Activated T-helper 2 cell treated with anti-CD3 and anti-CD28 coated beads, Interferon-gamma antibody, Interleukin-2, Interleukin-4, amounts not matched to agents 10 μg/mL and 5 μg/mL and 100 μg/mL, durations not matched to agents 14 hours and 24 hours and 36 hours (primary cell): ENCODE measurements at regions of chr11 and their contacts with region 1.

Region 1: DNA sequence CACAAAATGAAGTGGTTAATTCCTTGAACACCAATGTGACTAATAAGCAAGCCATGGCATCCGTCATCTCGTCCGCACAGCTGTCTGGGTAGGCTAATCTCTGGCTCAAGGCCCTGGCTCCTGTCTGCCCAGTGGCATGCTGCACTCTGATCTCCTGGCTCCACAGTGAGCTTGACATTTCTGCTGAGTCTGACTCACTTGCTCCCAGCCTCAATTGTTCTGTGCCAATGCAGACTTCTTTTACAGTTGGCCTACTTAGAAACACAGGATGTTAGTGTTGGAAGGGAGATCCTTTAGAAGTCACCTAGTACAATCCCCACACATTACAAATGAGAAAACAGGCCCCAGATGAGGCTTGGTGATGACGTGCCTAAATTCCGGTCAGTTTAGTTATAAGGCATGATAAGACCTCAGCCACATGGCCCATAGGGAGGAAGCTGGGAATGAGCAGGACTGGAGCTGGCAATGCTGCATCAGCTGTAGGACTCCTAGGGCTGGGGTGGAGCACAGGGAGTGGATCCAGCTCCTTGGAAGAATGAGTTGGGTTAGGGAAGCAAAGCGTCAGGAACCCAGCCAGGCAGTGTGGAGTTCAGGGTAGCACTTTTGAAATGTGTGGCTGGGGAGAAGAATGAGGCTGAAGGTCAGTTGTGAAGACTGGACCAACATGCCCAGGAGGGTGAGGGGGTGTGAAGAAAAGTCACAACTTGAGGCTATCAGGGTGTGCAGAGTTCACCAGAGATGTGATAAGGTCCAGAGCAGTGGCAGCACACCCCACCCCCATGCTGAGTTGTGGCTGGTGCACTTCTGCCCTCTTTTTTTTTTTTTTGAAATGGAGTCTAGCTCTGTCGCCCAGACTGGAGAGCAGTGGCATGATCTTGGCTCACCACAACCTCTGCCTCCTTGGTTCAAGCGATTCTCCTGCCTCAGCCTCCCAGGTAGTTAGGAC is 70.2 kb upstream of the EED start:
- DNase-seq: no peak
- H3K4me3 Mint-ChIP-seq: no peak overlapping the region
- H3K27ac Mint-ChIP-seq: no peak overlapping the region
- H3K4me1 Mint-ChIP-seq: peaks cover 15% of the 10 kb centered on the region
- H3K27me3 Mint-ChIP-seq: no peaks in the 10 kb centered on the region

Region 2: DNA sequence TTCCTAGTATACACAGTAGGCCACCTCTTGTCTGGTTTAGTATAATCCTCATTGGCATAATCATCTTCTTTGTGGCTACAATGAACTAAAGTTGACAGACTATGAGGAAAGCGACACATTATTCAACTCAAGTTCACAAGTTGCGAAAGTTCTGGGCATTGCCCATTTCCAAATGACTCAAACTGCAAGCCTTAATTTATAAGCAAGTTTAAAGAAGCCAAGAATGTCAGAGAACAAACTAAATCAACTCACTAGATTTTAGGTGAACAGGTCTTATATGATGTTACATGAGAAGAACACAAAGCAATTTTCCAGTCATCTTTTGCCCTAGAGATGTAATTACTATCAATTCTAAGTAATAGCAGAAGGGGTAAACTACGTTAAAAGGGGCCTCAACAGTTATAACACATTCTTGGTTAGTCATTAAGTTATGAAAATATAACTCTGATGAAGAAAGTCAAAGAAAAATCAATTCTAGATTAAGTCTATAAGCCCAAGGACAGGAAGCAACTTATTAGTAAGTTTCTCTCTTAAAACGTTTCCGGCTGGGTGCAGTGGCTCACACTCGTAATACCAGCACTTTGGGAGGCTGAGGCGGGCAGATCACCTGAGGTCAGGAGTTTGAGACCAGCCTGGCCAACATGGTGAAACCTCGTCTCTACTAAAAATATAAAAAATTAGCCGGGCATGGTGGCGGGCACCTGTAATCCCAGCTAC is 126.9 kb before region 1 on chr11:
- intact Hi-C with region 1: loop called (anchors 1 kb)
- DNase-seq: no peak
- H3K4me3 Mint-ChIP-seq: peak overlapping the region; percentile 65
- H3K27ac Mint-ChIP-seq: peak overlapping the region; percentile 96
- H3K4me1 Mint-ChIP-seq: peaks cover 73% of the 10 kb centered on the region
- H3K27me3 Mint-ChIP-seq: no peaks in the 10 kb centered on the region

Region 3: GRCh38 chr11:86116386-86116726 is 58.0 kb before region 1 on chr11:
- intact Hi-C with region 1: loop called (anchors 1 kb)
- DNase-seq: no peak
- H3K4me3 Mint-ChIP-seq: peak overlapping the region; percentile 22
- H3K27ac Mint-ChIP-seq: peak overlapping the region; percentile 83
- H3K4me1 Mint-ChIP-seq: peaks cover 42% of the 10 kb centered on the region
- H3K27me3 Mint-ChIP-seq: no peaks in the 10 kb centered on the region

Region 4: GRCh38 chr11:86160546-86161149 is 13.7 kb before region 1 on chr11:
- intact Hi-C with region 1: loop called (anchors 2 kb)
- DNase-seq: no peak
- H3K4me3 Mint-ChIP-seq: no peak overlapping the region
- H3K27ac Mint-ChIP-seq: no peak overlapping the region
- H3K4me1 Mint-ChIP-seq: peaks cover 36% of the 10 kb centered on the region
- H3K27me3 Mint-ChIP-seq: no peaks in the 10 kb centered on the region

Region 5: GRCh38 chr11:86202013-86202336 is 27.6 kb after region 1 on chr11:
- intact Hi-C with region 1: loop called (anchors 1 kb)
- DNase-seq: no peak
- H3K4me3 Mint-ChIP-seq: no peak overlapping the region
- H3K27ac Mint-ChIP-seq: no peak overlapping the region
- H3K4me1 Mint-ChIP-seq: peaks cover 15% of the 10 kb centered on the region
- H3K27me3 Mint-ChIP-seq: no peaks in the 10 kb centered on the region

Region 6: DNA sequence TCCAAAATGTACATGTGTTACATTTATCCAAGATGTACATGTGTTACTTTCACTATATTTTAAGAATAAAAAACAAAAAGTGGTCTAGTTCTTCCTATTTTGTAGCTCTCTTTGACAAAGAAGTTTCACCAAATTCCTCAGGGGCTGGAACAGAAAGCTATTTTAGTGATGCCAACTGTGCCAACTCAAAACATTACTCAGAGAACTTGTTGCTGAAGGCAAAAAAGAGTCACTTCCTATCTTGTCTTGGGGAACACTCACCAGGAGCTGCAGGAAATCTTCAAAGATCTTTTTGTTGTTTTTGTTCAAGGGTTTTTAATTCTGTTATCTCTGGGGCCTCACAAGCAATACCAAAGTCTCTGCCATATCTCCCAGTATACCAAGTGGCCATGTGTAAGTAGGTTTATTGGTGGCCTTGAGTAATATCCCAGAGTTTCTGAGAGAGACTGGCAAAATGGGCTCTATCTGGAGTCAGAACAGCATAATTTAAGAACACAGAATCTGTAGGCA is 56.6 kb after region 1 on chr11:
- intact Hi-C with region 1: loop called (anchors 2 kb)
- DNase-seq: no peak
- H3K4me3 Mint-ChIP-seq: no peak overlapping the region
- H3K27ac Mint-ChIP-seq: peak overlapping the region; percentile 38
- H3K4me1 Mint-ChIP-seq: peaks cover 54% of the 10 kb centered on the region
- H3K27me3 Mint-ChIP-seq: peaks cover 3% of the 10 kb centered on the region

Region 7: DNA sequence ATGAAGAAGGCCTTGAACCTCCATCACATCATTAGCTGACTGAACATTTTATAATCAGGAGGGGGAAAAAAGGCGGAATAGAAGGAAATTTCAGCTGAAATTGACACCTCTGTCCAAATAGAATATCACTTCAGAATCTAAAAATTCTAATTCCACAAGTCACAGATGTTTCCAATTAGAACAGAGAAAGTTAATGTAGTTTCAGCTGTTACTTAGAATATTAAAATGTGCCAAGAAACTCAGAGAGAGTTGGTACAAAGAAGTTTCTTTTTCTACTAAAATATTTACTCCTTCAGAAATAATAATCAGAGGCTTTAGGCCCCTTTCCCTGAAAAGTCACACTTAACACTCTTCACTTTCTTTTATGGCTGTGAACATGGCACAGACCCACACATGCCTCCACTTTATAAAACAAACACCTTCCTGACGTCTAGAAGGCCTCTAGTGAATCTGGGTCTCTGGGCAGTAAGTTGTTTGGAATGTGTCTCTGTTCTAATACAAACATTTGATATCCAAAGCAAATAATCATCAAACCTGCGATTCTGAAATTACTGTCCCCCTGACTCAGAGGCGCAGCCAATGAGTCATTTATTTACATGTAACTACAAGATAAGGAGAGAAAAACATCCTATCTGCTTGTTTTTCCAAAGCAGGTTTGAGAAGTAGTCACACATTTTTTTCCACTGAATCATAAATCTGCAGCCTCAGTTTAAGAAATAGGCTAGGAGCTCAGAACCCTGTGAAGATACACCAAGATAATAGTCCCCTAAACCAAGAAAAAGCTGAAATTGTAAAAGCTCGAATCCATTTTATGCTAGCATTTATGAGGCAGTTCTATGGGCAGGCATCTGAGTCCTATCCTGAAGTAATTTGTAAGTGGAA is 349.6 kb after region 1 on chr11:
- intact Hi-C with region 1: loop called (anchors 5 kb)
- DNase-seq: no peak
- H3K4me3 Mint-ChIP-seq: no peak overlapping the region
- H3K27ac Mint-ChIP-seq: peak overlapping the region; percentile 62
- H3K4me1 Mint-ChIP-seq: peaks cover 26% of the 10 kb centered on the region
- H3K27me3 Mint-ChIP-seq: peaks cover 3% of the 10 kb centered on the region